ENCODE measurements at regions of chr14 and their contacts with region 1.

Region 1: DNA sequence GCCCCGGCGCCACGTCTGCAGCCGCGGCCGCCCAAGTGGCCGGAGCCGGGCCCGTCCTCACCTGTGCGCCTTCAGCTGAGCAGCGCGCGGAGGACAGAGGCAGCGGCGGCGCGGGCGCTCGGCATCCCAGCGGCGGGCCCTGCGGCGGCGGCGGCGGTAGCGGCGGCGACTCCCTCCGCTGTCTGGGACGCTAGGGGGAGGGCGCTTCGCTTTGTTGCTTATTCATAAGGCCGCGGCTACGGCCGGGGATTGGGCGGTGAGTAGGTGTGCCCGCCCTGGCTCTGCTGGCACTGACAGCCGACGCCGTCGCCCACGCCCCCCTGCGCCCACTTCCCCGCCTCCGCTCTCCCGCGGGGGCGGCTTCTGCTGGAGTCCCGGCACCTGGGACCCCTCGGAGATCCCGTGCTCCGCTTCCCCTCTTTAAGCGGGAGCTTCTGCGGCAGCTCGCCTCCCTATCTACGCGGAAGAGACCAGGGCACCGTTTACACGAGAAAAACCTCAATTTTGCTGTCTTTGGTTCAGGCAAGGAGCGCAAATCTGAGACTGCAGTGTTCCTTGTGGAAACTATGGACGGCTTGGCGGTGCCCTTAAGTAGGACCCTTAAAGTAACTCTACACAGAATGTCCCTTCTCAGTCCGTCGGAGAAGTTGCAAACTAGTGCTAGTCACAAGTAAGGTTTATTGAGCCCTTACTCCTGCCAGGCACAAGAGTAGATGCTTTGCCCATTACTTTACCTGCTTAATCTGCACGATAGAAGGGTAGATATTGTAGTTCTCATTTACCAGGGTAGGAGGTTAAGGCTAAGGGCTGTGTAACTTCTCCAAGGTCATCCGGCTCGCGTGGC is at the start of gene ARMH4:
- DNase-seq: peak; percentile 88
- H3K4me3 ChIP-seq: peak within 1 kb of the TSS; percentile 55 to 86 (median 68)
- H3K27ac ChIP-seq: peak within 1 kb of the TSS; percentile 64 to 74 (median 68)
- H3K4me1 ChIP-seq: peaks cover 0 to 21% (median 13%) of the 10 kb centered on the region in 4 donors
- H3K27me3 ChIP-seq: no peaks in the 10 kb centered on the region
- CTCF ChIP-seq: peak in 1 of 4 experiments; percentile 15
- EP300 ChIP-seq: no peak
- POLR2A ChIP-seq: no peak
- total RNA-seq, gene ARMH4: 1.2 to 6.6 (median 3.7) TPM

Region 2: DNA sequence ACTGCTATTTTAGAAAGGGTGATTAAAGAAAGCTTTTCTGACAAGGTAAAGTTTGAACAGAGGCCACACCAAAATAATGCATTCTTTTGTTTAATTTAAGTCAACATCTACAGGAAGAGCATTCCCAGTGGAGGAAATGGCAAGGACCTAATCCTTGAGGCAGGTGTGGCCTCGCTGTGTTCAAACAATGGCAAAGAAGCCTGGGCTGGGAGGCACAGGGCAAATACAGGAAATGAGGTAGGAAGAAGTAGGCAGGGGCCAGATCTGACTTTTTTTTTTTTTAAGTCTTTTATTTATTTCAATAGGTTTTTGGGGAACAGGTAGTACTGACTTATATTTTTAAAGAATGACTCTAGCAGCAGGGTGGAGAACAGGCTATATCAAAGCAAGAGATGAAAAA is 53.7 kb before region 1 on chr14:
- intact Hi-C with region 1: no loop called
- DNase-seq: no peak
- H3K4me3 ChIP-seq: no peak overlapping the region
- H3K27ac ChIP-seq: peak overlapping the region in 1 of 4 donors; percentile 52
- H3K4me1 ChIP-seq: no peaks in the 10 kb centered on the region
- H3K27me3 ChIP-seq: no peaks in the 10 kb centered on the region
- CTCF ChIP-seq: no peak
- EP300 ChIP-seq: no peak
- POLR2A ChIP-seq: no peak

Region 3: GRCh38 chr14:58118097-58118815 is 34.0 kb before region 1 on chr14:
- intact Hi-C with region 1: loop called (anchors 5 kb)
- DNase-seq: no peak
- H3K4me3 ChIP-seq: no peak overlapping the region
- H3K27ac ChIP-seq: peak overlapping the region in 1 of 4 donors; percentile 12
- H3K4me1 ChIP-seq: peaks cover 0 to 17% (median 0%) of the 10 kb centered on the region in 4 donors
- H3K27me3 ChIP-seq: no peaks in the 10 kb centered on the region
- CTCF ChIP-seq: no peak
- EP300 ChIP-seq: no peak
- POLR2A ChIP-seq: no peak

Region 4: GRCh38 chr14:58752771-58753201 is 600.5 kb after region 1 on chr14:
- intact Hi-C with region 1: no loop called
- DNase-seq: peak; percentile 85
- H3K4me3 ChIP-seq: no peak overlapping the region
- H3K27ac ChIP-seq: peak overlapping the region in 3 of 4 donors; percentile 35 to 45 (median 41)
- H3K4me1 ChIP-seq: peaks cover 0 to 48% (median 35%) of the 10 kb centered on the region in 4 donors
- H3K27me3 ChIP-seq: no peaks in the 10 kb centered on the region
- CTCF ChIP-seq: no peak
- EP300 ChIP-seq: no peak
- POLR2A ChIP-seq: no peak

Measured in sigmoid colon (tissue), 7 donors.